Lower leg skin (tissue), 4 donors: ENCODE measurements at regions of chr2 and their contacts with region 1.

Region 1: DNA sequence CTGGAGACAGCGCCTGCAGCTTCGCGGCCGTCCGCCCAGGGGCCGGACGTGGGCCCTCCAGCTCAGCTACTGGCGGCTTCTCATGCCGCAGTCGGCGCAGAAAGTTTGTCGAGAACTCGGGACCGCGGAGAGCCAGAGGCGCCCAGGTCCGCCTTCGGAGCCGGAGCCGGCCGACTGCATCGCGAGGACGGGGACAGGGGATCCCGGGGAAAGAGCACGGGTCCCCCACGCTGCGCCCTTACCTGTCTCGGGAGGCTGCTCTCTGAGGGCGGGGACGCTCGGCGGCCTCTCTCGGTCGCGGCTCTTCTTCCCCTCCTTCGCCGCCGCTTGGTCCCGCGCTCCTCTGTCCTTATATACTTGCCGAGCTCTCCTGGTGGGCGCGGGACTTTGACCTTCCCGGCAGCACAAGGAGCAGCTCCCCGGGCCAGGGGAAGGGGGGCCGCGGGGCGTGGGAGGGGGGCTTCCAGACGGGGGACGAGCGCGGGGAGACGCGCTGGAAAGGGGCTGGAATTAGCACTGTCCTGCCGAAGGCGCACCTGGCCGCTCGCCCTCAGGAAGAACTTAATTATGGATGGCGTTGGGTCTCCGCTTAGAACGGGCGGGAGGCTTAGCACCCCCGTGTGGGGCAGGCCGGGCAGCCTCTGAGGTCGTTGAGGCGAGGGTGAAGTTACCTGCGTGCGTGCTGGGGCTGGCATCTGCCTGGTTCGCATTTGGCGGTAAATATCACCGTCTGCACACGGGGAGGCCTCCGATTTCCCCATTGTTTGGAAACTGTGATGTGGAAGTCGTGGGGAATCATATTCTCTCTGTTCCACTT is at the start of gene POMC:
- DNase-seq: no peak
- H3K4me3 ChIP-seq: peak within 1 kb of the TSS; percentile 13
- CTCF ChIP-seq: no peak
- POLR2A ChIP-seq: no peak
- total RNA-seq, gene POMC: 3.4 to 23.3 (median 6.6) TPM

Region 2: DNA sequence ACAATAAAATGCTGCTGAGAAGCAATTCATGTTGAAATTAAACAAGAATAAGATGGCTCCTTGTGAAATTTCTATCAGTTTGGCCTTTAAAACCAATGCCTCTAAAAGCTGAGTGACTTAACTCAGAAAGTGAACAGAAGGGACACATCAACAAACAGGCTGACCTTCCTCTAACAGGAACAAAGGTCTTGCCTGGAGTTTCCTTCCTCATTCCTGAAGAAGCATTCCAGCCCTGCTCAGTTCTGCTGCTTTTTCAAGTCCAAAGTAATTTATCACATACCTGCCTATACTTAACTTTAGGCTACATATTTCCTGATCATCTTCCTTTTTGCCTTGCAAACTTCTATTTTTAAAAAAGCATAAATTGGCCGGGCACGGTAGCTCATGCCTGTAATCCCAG is 389.3 kb before region 1 on chr2:
- intact Hi-C with region 1: no loop called
- DNase-seq: no peak
- H3K4me3 ChIP-seq: no peak overlapping the region
- CTCF ChIP-seq: no peak
- POLR2A ChIP-seq: no peak

Region 3: GRCh38 chr2:25204190-25204838 is 35.9 kb after region 1 on chr2:
- intact Hi-C with region 1: loop called (anchors 1 kb)
- DNase-seq: no peak
- H3K4me3 ChIP-seq: no peak overlapping the region
- CTCF ChIP-seq: no peak
- POLR2A ChIP-seq: no peak